MCF 10A (cell line): ENCODE measurements at regions of chr7 and their contacts with region 1.

Region 1: DNA sequence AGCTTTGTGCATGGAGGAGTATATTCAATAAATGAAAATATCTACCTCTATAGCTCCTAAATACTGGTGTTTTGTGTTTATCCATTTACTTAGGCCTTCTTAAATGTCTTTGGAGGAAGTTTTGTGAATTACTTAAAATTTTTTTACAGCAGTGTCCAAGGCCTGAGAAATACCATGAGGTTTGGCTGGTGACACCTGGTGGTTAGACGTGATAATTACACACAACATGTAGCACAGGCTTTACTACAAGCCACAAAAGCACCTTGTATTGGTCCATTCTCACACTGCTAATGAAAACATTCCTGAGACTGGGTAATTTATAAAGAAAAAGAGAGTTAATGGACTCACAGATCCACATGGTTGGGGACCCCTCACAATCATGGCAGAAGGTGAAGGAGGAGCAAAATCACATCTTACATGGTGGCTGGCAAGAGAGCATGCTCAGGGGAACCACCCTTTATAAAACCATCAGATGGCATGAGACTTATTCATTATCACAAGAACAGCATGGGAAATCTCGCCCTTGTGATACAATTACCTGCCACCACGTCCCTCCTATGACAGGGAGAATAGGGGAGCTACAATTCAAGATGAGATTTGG is 20.6 kb downstream of the HYAL4 start:
- DNase-seq: peak; percentile 79
- H3K4me3 Mint-ChIP-seq: no peak overlapping the region
- H3K27ac Mint-ChIP-seq: no peak overlapping the region
- H3K4me1 Mint-ChIP-seq: peaks cover 11% of the 10 kb centered on the region
- H3K27me3 Mint-ChIP-seq: no peaks in the 10 kb centered on the region
- CTCF ChIP-seq: peak; percentile 59

Region 2: GRCh38 chr7:123635551-123636359 is 229.9 kb before region 1 on chr7:
- CTCF ChIA-PET with region 1: interaction called, 16 read pairs
- POLR2A ChIA-PET with region 1: no interaction called
- intact Hi-C with region 1: loop called (anchors 1 kb)
- DNase-seq: peak; percentile 59
- H3K4me3 Mint-ChIP-seq: no peak overlapping the region
- H3K27ac Mint-ChIP-seq: no peak overlapping the region
- H3K4me1 Mint-ChIP-seq: peaks cover 22% of the 10 kb centered on the region
- H3K27me3 Mint-ChIP-seq: no peaks in the 10 kb centered on the region
- CTCF ChIP-seq: peak; percentile 70

Region 3: DNA sequence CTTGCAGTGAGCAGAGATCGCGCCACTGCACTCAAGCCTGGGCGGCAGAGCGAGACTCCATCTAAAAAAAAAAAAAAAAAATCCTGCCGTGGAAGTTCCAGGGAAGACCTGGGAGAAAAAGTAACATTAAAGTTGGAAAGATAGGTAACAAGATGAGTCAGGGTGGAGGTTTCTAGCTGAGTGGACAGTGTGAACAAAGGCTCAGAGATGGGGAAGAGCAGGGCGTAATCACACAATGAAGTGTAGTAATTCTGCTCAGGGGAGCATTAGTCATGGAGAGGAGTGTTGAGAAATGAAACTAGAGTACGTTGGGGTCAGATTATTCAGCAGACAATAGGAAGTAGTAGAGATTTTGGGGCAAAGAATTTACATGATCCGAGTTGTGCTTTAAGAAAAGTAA is 95.2 kb before region 1 on chr7:
- CTCF ChIA-PET with region 1: interaction called, 60 read pairs
- POLR2A ChIA-PET with region 1: interaction called, 10 read pairs
- intact Hi-C with region 1: loop called (anchors 1 kb)
- DNase-seq: peak; percentile 97
- H3K4me3 Mint-ChIP-seq: peak overlapping the region; percentile 67
- H3K27ac Mint-ChIP-seq: peak overlapping the region; percentile 93
- H3K4me1 Mint-ChIP-seq: peaks cover 38% of the 10 kb centered on the region
- H3K27me3 Mint-ChIP-seq: no peaks in the 10 kb centered on the region
- CTCF ChIP-seq: no peak

Region 4: DNA sequence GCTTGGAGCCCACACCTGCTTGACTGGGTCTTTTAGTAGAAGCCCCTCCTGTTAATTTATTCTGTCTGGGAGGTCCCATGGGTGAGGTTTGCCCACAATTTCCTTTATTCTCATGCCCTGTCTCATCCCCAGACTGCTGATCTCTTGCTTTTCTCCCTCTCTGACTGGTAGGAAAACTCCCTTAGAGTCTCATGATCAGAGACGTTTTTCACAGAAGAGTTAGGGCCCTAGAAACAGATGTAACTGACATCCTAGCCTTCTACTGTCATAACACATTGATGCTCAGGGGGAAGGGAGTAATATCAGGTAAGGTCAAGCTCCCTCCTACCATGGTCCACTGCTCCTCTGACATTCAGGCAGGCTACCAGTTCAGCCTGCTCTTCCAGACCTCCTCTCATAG is 73.1 kb before region 1 on chr7:
- CTCF ChIA-PET with region 1: interaction called, 146 read pairs
- POLR2A ChIA-PET with region 1: interaction called, 58 read pairs
- intact Hi-C with region 1: no loop called
- DNase-seq: no peak
- H3K4me3 Mint-ChIP-seq: no peak overlapping the region
- H3K27ac Mint-ChIP-seq: no peak overlapping the region
- H3K4me1 Mint-ChIP-seq: peaks cover 6% of the 10 kb centered on the region
- H3K27me3 Mint-ChIP-seq: no peaks in the 10 kb centered on the region
- CTCF ChIP-seq: no peak

Region 5: GRCh38 chr7:123823898-123824753 is 41.5 kb before region 1 on chr7:
- CTCF ChIA-PET with region 1: interaction called, 24 read pairs
- POLR2A ChIA-PET with region 1: interaction called, 4 read pairs
- intact Hi-C with region 1: no loop called
- DNase-seq: no peak
- H3K4me3 Mint-ChIP-seq: no peak overlapping the region
- H3K27ac Mint-ChIP-seq: no peak overlapping the region
- H3K4me1 Mint-ChIP-seq: peaks cover 8% of the 10 kb centered on the region
- H3K27me3 Mint-ChIP-seq: no peaks in the 10 kb centered on the region
- CTCF ChIP-seq: no peak

Region 6: DNA sequence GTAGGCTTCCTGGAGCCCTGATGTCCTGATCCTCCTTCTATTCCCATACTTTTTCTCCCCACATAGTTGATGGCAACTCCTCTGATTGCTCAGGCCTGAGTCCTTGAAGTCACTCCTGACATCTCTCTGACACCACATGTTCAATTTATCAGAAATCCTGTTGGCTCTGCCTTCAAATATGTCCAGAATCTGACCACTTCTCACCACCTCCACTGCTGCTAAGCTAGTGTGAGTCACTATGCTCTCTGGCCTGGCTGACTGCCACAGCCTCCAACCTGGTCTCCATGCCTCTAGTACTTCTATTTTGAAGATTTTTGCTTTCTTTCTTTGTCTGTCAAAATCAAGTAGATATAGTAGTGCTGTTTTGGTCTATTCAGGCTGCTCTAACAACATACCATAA is 114.3 kb after region 1 on chr7:
- CTCF ChIA-PET with region 1: no interaction called
- POLR2A ChIA-PET with region 1: no interaction called
- intact Hi-C with region 1: no loop called
- DNase-seq: peak; percentile 64
- H3K4me3 Mint-ChIP-seq: no peak overlapping the region
- H3K27ac Mint-ChIP-seq: no peak overlapping the region
- H3K4me1 Mint-ChIP-seq: peaks cover 6% of the 10 kb centered on the region
- H3K27me3 Mint-ChIP-seq: no peaks in the 10 kb centered on the region
- CTCF ChIP-seq: no peak